ENCODE measurements at regions of chr12 and their contacts with region 1.

Region 1: GRCh38 chr12:58310828-58311622 is 369.7 kb downstream of the ATP23 start:
- DNase-seq: no peak
- ATAC-seq: peak; percentile 54
- H3K4me3 ChIP-seq: no peak overlapping the region
- H3K27ac ChIP-seq: no peak overlapping the region
- H3K4me1 ChIP-seq: no peaks in the 10 kb centered on the region
- H3K27me3 ChIP-seq: no peaks in the 10 kb centered on the region
- CTCF ChIP-seq: no peak
- EP300 ChIP-seq: no peak
- POLR2A ChIP-seq: no peak
- RAD21 ChIP-seq: no peak

Region 2: DNA sequence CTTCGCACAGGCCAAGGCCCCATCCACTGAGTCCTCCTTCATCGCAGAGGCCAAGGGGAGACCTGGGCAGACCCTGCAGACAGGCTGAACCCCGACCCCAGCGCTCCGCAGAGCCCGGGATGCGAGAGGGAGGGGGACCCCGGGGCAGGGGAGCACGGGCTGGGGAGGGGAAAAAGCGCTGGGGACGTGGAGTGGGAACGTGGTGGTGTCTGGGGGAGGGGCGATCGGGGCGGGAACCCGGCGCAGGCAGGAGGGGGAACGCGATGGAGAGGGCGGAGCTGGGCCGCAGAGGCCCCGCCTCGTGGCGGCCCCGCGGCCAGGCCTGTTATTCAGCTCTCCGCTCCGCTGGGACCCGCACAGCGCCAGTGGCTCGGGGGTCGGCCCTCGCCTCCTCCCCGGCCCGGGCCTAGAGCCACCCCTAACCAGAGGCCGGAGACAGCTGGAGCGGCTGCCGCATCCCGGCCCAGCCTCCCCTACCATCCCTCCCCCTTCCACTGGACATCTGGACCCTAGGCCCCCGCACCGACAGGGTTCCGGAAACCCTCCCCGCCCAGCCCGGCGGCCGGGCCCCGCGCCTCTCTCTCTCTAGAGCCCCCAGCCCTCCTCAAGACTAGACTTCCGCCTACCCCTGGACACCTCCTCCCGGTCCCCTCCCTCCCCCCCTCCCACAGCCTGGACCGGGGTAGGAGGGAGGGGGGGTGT is 699.8 kb before region 1 on chr12 and contains the start of gene ARHGEF25:
- CTCF ChIA-PET with region 1: no interaction called
- POLR2A ChIA-PET with region 1: no interaction called
- RAD21 ChIA-PET with region 1: no interaction called
- SMC1A ChIA-PET with region 1: no interaction called
- in situ Hi-C with region 1: no loop called
- intact Hi-C with region 1: no loop called
- DNase-seq: no peak
- ATAC-seq: peak; percentile 82
- H3K4me3 ChIP-seq: peak within 1 kb of the TSS; percentile 70
- H3K27ac ChIP-seq: no peak within 1 kb of the TSS
- H3K4me1 ChIP-seq: peaks cover 10% of the 10 kb centered on the region
- H3K27me3 ChIP-seq: no peaks in the 10 kb centered on the region
- CTCF ChIP-seq: no peak
- EP300 ChIP-seq: no peak
- POLR2A ChIP-seq: peak; percentile 82
- RAD21 ChIP-seq: no peak
- polyA plus RNA-seq, gene ARHGEF25: 0.08 TPM in 1 of 2 experiments, not detected in the other

Region 3: DNA sequence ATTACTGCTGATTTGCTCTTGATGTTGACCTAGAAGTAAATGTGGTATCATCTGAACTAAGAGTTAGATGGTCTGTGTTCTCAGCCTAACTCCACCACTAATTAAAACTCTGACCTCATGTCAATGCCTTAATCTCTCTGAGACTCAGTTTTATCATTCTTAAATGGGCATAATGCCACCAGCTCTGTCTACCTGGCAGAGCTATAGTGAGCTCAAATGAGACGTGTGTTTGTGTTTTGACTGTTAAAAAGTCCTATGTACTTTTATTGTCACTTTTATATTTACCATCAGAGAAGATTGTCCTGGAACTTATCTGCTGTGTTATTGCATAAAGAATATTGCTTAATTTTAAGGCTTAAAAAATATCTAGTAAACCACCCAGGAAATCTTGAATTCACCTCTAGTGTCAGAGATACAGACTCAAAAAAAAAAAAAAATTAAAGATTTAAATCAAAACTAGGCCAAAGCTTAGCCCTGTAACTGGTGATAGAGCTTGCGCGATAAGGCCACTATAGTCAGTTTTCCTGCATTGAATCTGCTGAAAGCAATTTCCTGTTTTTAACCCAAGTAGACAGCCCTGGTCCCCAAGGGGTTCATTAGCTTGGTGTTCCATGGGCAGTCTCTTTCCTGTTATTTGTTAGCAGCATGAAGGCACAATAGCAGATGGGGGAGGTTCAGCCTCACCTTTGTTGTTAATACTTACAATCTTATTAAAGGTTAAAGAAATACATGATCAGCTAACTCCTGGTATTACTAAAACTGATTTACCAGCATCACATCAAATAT is 107.9 kb before region 1 on chr12:
- CTCF ChIA-PET with region 1: no interaction called
- POLR2A ChIA-PET with region 1: no interaction called
- RAD21 ChIA-PET with region 1: no interaction called
- SMC1A ChIA-PET with region 1: no interaction called
- in situ Hi-C with region 1: loop called (anchors 25 kb)
- intact Hi-C with region 1: no loop called
- DNase-seq: no peak
- ATAC-seq: no peak
- H3K4me3 ChIP-seq: no peak overlapping the region
- H3K27ac ChIP-seq: no peak overlapping the region
- H3K4me1 ChIP-seq: no peaks in the 10 kb centered on the region
- H3K27me3 ChIP-seq: no peaks in the 10 kb centered on the region
- CTCF ChIP-seq: no peak
- EP300 ChIP-seq: no peak
- POLR2A ChIP-seq: no peak
- RAD21 ChIP-seq: no peak

Measured in GM12878 (cell line).